ENCODE measurements at regions of chr2 and their contacts with region 1.

Region 1: DNA sequence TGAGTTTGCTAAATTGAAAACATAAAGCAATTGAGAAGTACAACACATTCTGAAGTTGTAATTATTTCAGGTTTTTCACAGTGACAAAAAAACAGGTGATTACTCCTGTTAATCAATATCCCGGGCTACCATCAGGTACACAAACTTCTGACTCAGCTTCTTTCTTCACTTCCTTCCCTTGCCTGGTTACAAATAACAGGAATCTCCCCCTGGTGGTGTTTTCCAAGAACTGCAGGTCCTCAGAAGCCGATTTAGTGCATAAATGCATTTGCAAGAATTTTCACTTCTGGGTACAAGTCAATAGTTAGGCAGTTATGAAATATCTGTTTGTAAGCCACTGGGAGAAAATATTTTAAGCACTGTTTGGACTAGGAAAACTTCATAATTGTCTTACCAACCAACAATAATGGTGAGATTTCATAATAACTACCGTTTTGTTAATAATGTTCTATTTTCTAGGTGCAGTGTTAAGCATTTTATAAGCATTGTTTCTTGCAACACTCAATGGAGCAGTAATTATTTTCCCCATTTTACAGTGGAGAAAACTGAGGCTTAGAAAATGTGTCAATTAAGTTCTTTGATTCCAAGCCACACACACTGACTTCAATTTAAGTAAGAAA is 12.4 kb upstream of the GMCL1 start:
- DNase-seq: peak; percentile 76
- H3K4me3 ChIP-seq: no peak overlapping the region
- H3K27ac ChIP-seq: no peak overlapping the region
- H3K27me3 ChIP-seq: no peaks in the 10 kb centered on the region
- CTCF ChIP-seq: peak; percentile 90

Region 2: GRCh38 chr2:69645921-69646320 is 171.1 kb before region 1 on chr2:
- CTCF ChIA-PET with region 1: no interaction called
- POLR2A ChIA-PET with region 1: no interaction called
- DNase-seq: no peak
- H3K4me3 ChIP-seq: no peak overlapping the region
- H3K27ac ChIP-seq: no peak overlapping the region
- H3K27me3 ChIP-seq: no peaks in the 10 kb centered on the region
- CTCF ChIP-seq: no peak

Region 3: GRCh38 chr2:69734035-69734631 is 82.9 kb before region 1 on chr2:
- CTCF ChIA-PET with region 1: interaction called, 36 read pairs
- POLR2A ChIA-PET with region 1: no interaction called
- DNase-seq: no peak
- H3K4me3 ChIP-seq: no peak overlapping the region
- H3K27ac ChIP-seq: no peak overlapping the region
- H3K27me3 ChIP-seq: no peaks in the 10 kb centered on the region
- CTCF ChIP-seq: no peak

Region 4: GRCh38 chr2:69750246-69750645 is 66.8 kb before region 1 on chr2:
- CTCF ChIA-PET with region 1: interaction called, 10 read pairs
- POLR2A ChIA-PET with region 1: no interaction called
- DNase-seq: no peak
- H3K4me3 ChIP-seq: no peak overlapping the region
- H3K27ac ChIP-seq: no peak overlapping the region
- H3K27me3 ChIP-seq: no peaks in the 10 kb centered on the region
- CTCF ChIP-seq: no peak

Region 5: GRCh38 chr2:69767034-69767433 is 50.0 kb before region 1 on chr2:
- CTCF ChIA-PET with region 1: interaction called, 23 read pairs
- POLR2A ChIA-PET with region 1: no interaction called
- DNase-seq: peak; percentile 79
- H3K4me3 ChIP-seq: no peak overlapping the region; the same call in 1 of the 2 replicates
- H3K27ac ChIP-seq: peak overlapping the region; percentile 93
- H3K27me3 ChIP-seq: no peaks in the 10 kb centered on the region
- CTCF ChIP-seq: peak; percentile 46

Region 6: DNA sequence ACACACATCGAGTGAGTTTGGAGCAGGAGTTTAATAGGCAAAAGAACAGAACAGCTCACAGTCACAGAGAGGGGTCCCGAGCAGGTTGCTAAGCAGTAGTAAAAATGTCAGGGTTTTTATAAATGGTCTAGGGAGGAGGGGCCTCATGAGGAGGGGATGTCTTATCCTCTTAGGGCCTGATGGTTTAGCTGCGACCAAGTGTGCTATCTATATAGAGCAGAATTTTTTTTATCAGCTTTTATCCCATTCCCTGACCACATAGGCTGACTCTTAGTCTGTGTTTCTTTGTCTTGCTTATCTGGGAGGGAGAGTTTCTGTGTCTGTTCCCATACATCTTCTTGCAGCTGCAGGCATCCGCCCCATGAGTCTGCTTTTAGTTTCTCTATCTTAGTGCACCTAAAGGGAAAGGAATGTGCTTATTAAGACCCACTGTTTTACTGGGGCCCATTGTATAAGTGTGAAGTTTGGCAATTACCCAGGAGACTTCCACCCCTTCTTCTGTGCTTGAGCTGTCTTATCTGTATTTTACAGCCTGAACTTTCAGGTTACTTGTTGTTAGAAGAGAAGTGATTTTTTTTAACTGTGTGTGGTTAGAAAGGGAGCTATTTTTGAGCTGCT is 18.0 kb before region 1 on chr2:
- CTCF ChIA-PET with region 1: interaction called, 43 read pairs
- POLR2A ChIA-PET with region 1: interaction called, 9 read pairs
- DNase-seq: peak; percentile 20
- H3K4me3 ChIP-seq: no peak overlapping the region
- H3K27ac ChIP-seq: peak overlapping the region; percentile 31
- H3K27me3 ChIP-seq: no peaks in the 10 kb centered on the region
- CTCF ChIP-seq: no peak

Region 7: DNA sequence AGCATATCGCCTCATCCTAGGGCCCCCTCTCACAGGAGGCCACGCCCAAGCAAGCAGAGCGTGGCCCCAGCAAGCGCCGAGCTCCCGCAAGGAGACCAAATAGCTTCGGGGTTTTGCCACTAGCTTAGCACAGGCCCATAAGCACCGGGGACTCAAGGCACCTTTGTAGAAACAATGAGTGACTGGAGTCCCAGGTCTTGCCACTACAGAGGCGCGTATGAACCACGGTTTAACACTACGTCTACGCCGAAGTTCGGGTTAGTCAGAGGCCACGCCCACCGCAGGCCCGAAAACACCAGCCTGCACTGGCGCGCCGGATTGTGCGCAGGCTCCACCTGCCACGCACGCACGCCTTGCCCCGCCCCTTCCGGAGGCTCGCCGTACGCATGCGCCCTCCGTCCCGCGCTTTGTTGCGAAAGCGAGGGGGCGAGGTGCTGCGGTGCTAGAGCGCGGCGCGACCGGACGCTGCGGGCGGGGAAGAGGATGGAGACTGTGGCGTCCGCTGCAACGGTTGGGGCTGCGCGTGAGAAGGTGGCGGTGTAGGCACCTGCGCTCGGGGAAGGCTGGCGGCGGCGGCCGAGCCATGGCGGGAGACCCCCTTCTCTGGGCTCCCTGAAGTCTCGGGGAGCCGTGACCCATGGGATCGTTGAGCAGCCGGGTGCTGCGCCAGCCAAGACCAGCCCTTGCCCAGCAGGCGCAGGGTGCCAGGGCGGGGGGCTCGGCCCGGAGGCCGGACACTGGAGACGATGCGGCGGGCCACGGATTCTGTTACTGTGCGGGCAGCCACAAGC is 12.4 kb after region 1 on chr2 and contains the start of gene GMCL1:
- CTCF ChIA-PET with region 1: interaction called, 34 read pairs
- POLR2A ChIA-PET with region 1: no interaction called
- DNase-seq: peak; percentile 89
- H3K4me3 ChIP-seq: peak within 1 kb of the TSS; percentile 85
- H3K27ac ChIP-seq: peak within 1 kb of the TSS; percentile 95
- H3K27me3 ChIP-seq: no peaks in the 10 kb centered on the region
- CTCF ChIP-seq: no peak
- polyA plus RNA-seq, gene GMCL1: 5.3 and 7.2 TPM in 2 replicates

Measured in AG04450 (cell line).